ENCODE measurements at regions of chr11 and their contacts with region 1.

Region 1: GRCh38 chr11:46392421-46393230 is 1.1 kb upstream of the CHRM4 start:
- DNase-seq: peak; percentile 65 to 88 (median 87)
- H3K4me3 ChIP-seq: peak overlapping the region; percentile 26 to 64 (median 57)
- H3K27ac ChIP-seq: no peak overlapping the region
- H3K4me1 ChIP-seq: peaks cover 0 to 56% (median 51%) of the 10 kb centered on the region in 4 experiments
- H3K27me3 ChIP-seq: peaks cover 0 to 60% (median 23%) of the 10 kb centered on the region in 5 experiments

Region 2: DNA sequence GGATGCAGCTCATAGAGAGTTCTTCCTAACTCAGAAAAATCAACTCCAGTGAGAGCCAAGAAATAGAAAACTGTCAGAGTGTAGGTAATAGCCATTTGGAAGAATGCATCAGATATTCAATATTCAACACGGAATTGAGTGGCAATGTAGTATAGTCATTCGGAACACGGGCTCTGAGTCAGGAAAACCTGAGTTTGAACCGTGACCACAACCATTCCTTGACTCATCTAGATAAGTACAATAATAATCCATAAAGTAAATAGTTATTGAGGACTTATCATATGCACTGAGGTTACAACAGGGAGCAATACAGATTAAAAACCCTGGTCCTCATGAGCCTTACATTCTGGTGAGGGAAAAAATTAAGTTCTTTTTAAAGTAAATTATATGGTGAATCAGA is 208.8 kb before region 1 on chr11:
- CTCF ChIA-PET with region 1: no interaction called
- POLR2A ChIA-PET with region 1: no interaction called
- DNase-seq: no peak
- H3K4me3 ChIP-seq: no peak overlapping the region
- H3K27ac ChIP-seq: no peak overlapping the region
- H3K4me1 ChIP-seq: no peaks in the 10 kb centered on the region
- H3K27me3 ChIP-seq: no peaks in the 10 kb centered on the region

Region 3: GRCh38 chr11:46352063-46352841 is 40.4 kb before region 1 on chr11:
- CTCF ChIA-PET with region 1: interaction called, 19 read pairs
- POLR2A ChIA-PET with region 1: no interaction called
- DNase-seq: peak; percentile 70 to 81 (median 80)
- H3K4me3 ChIP-seq: peak overlapping the region in 1 of 7 experiments; percentile 5
- H3K27ac ChIP-seq: peak overlapping the region in 1 of 2 experiments; percentile 56
- H3K4me1 ChIP-seq: peaks cover 11 to 75% (median 64%) of the 10 kb centered on the region in 4 experiments
- H3K27me3 ChIP-seq: no peaks in the 10 kb centered on the region

Region 4: DNA sequence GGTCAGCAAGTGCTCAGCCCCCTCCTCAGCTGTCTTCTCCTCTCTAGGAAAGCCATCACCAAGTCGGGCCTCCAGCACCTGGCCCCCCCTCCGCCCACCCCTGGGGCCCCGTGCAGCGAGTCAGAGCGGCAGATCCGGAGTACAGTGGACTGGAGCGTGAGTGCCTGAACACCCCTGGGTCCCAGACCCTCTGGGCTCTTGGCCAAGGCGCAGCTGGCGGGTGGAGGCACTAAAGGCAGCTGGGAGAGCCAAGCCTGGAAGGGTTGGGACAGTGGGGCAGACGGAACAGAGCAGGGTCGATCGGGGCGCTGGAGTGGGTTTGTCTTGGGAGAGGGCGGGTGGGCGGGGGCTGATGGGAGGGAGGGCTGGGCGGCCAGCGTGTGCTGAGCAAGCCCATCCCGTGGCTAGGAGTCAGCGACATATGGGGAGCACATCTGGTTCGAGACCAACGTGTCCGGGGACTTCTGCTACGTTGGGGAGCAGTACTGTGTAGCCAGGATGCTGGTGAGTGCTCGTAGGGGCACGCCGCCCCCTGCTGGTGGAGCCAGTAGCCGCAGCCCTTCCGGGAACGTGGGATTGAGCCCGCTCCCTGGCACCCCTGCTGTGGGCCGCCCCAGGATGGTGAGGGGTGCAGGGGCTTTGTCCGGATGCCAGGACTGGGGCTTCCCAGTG is 25.2 kb before region 1 on chr11:
- CTCF ChIA-PET with region 1: interaction called, 12 read pairs
- POLR2A ChIA-PET with region 1: no interaction called
- DNase-seq: peak; percentile 60 to 77 (median 75)
- H3K4me3 ChIP-seq: no peak overlapping the region
- H3K27ac ChIP-seq: no peak overlapping the region
- H3K4me1 ChIP-seq: peaks cover 0 to 41% (median 32%) of the 10 kb centered on the region in 4 experiments
- H3K27me3 ChIP-seq: no peaks in the 10 kb centered on the region

Region 5: DNA sequence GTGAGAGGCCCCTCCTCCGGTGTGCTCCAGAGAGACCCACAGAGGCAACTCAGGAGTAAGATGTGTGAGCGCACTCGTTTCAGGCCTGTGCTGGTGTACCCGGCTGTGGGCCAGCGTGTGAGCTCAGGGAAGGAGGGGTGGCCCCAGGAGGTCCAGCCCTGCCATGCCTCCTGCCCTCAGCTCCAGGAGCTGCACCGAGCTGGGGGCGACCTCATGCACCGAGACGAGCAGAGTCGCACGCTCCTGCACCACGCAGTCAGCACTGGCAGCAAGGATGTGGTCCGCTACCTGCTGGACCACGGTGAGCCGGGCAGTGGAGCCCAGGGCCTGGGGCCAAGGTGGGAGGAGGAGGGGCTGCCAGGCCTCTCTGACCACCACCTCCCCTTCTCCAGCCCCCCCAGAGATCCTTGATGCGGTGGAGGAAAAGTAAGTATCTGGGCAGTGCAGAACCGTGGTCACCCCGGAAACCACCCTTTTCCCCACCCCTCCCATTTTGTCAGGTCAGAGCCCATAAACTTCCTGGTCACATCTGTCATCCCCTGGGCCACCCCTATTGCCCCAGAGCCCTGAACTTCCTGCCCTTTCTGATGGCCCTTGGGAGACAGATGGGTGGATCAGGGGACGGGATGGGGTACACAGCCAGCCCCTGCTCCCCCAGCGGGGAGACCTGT is 13.7 kb before region 1 on chr11:
- CTCF ChIA-PET with region 1: interaction called, 13 read pairs
- POLR2A ChIA-PET with region 1: no interaction called
- DNase-seq: no peak
- H3K4me3 ChIP-seq: no peak overlapping the region
- H3K27ac ChIP-seq: no peak overlapping the region
- H3K4me1 ChIP-seq: peaks cover 0 to 28% (median 26%) of the 10 kb centered on the region in 4 experiments
- H3K27me3 ChIP-seq: no peaks in the 10 kb centered on the region

Region 6: GRCh38 chr11:46404476-46405017 is 11.9 kb after region 1 on chr11:
- CTCF ChIA-PET with region 1: interaction called, 52 read pairs
- POLR2A ChIA-PET with region 1: no interaction called
- DNase-seq: no peak
- H3K4me3 ChIP-seq: no peak overlapping the region
- H3K27ac ChIP-seq: no peak overlapping the region
- H3K4me1 ChIP-seq: no peaks in the 10 kb centered on the region
- H3K27me3 ChIP-seq: no peaks in the 10 kb centered on the region

Region 7: GRCh38 chr11:46421257-46421880 is 28.7 kb after region 1 on chr11:
- CTCF ChIA-PET with region 1: no interaction called
- POLR2A ChIA-PET with region 1: no interaction called
- DNase-seq: no peak
- H3K4me3 ChIP-seq: no peak overlapping the region
- H3K27ac ChIP-seq: no peak overlapping the region
- H3K4me1 ChIP-seq: no peaks in the 10 kb centered on the region
- H3K27me3 ChIP-seq: no peaks in the 10 kb centered on the region